Vagina (tissue), 2 donors: ENCODE measurements at regions of chr17 and their contacts with region 1.

Region 1: DNA sequence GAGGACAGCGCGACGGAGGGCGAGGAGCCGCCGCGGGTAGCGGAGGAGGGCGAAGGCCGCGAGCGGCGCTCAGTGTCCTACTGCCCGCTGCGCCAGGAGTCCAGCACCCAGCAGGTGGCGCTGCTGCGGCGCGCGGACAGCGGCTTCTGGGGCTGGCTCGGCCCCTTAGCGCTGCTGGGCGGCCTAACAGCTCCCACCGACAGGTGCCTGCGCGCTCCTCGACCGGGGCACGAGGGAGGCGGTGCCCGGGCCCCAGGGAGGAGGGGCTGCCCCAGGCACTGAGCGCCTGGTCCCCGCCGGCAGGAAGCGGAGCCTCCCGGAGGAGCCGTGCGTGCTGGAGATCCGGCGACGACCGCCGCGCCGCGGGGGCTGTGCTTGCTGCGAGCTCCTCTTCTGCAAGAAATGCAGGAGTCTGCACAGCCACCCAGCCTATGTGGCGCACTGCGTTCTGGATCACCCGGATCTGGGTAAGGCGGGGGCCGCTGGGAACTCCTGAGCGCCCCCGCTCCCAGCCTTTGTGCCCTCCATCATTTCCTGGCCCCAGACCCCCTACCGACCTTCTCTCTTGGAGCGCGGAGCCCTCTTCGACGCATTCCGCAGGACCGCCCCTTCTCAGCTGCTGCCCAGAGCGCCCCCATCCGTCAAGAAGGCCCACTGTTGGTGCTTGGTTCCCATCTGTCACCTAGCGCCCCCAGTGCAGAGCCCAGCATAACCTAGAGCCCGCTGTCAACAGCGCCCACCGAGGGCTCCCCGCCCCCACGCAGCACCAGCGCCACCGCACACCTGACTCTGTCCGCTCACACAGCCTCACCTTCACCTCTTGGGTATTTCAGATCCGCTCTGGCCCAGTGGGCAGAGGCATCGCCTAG is 3.7 kb downstream of the C17orf50 start:
- DNase-seq: no peak
- H3K4me3 ChIP-seq: peak overlapping the region; percentile 35 to 47
- H3K27ac ChIP-seq: no peak overlapping the region
- H3K4me1 ChIP-seq: peaks cover 12% of the 10 kb centered on the region
- H3K27me3 ChIP-seq: no peaks in the 10 kb centered on the region
- CTCF ChIP-seq: peak; percentile 84 to 95 (median 89)
- POLR2A ChIP-seq: no peak

Region 2: GRCh38 chr17:35804658-35805192 is 40.4 kb after region 1 on chr17:
- intact Hi-C with region 1: loop called (anchors 2 kb)
- DNase-seq: no peak
- H3K4me3 ChIP-seq: no peak overlapping the region
- H3K27ac ChIP-seq: no peak overlapping the region
- H3K4me1 ChIP-seq: peaks cover 26% of the 10 kb centered on the region
- H3K27me3 ChIP-seq: no peaks in the 10 kb centered on the region
- CTCF ChIP-seq: peak; percentile 65 to 79 (median 66)
- POLR2A ChIP-seq: no peak